MCF 10A (cell line): ENCODE measurements at regions of chr19 and their contacts with region 1.

Region 1: GRCh38 chr19:50476224-50476942 is at the starts of genes EMC10 and GARIN5A:
- DNase-seq: peak; percentile 89
- H3K4me3 Mint-ChIP-seq: peak within 1 kb of the TSS; percentile 99
- H3K27ac Mint-ChIP-seq: peak within 1 kb of the TSS; percentile 88
- H3K4me1 Mint-ChIP-seq: peaks cover 13% of the 10 kb centered on the region
- H3K27me3 Mint-ChIP-seq: no peaks in the 10 kb centered on the region
- CTCF ChIP-seq: no peak
- total RNA-seq, gene EMC10: 61.3 and 61.8 TPM in 2 replicates
- total RNA-seq, gene GARIN5A: 1.5 and 2.7 TPM in 2 replicates

Region 2: GRCh38 chr19:50383852-50384684 is 92.3 kb before region 1 on chr19 and contains the start of gene POLD1:
- CTCF ChIA-PET with region 1: no interaction called
- POLR2A ChIA-PET with region 1: interaction called, 6 read pairs
- intact Hi-C with region 1: loop called (anchors 1 kb)
- DNase-seq: peak; percentile 98
- H3K4me3 Mint-ChIP-seq: peak within 1 kb of the TSS; percentile 85
- H3K27ac Mint-ChIP-seq: peak within 1 kb of the TSS; percentile 72
- H3K4me1 Mint-ChIP-seq: peaks cover 22% of the 10 kb centered on the region
- H3K27me3 Mint-ChIP-seq: no peaks in the 10 kb centered on the region
- CTCF ChIP-seq: no peak
- total RNA-seq, gene POLD1: 18.9 and 31.9 TPM in 2 replicates

Region 3: DNA sequence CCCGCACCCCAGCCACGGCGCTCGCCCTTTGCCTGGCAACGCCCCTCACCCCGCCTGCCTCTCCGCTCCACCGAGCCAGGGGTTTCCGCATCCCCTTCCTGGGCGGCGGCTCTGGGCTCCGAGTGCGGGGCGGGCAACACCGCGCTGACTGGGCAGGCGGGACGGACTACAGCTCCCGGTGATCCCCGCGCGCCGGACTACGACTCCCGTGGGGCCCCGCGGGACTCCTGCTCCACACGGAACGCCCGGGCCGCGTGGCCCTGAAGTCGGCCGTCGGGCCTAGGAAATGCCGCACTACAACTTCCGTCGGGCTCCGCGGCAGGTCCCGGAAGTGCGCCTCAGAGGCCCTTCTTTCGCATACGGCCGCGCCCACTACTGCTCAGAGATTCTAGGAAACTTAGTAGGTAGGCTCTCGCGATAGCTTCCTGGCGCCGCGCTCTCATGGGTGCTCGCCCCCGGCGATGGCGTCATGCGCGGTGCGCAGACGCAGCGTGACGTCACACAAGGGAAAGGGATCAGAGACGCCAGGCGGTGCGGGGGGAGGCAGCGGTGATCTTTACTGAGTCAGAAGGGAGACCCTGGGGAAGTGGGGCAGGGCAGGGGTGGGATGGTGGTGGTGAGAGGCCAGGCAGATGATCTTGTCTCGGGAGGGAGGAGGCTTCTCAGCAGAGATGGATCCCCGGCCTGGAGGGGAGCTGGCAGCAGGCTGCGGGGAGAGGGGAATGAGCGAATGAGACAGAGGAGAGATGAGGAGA is 34.9 kb after region 1 on chr19 and contains the start of gene JOSD2:
- CTCF ChIA-PET with region 1: interaction called, 4 read pairs
- POLR2A ChIA-PET with region 1: interaction called, 4 read pairs
- intact Hi-C with region 1: loop called (anchors 1 kb)
- DNase-seq: peak; percentile 100
- H3K4me3 Mint-ChIP-seq: peak within 1 kb of the TSS; percentile 86
- H3K27ac Mint-ChIP-seq: peak within 1 kb of the TSS; percentile 96
- H3K4me1 Mint-ChIP-seq: peaks cover 16% of the 10 kb centered on the region
- H3K27me3 Mint-ChIP-seq: no peaks in the 10 kb centered on the region
- CTCF ChIP-seq: no peak
- total RNA-seq, gene JOSD2: 65.8 and 76.9 TPM in 2 replicates

Region 4: GRCh38 chr19:50624949-50625600 is 148.7 kb after region 1 on chr19:
- CTCF ChIA-PET with region 1: no interaction called
- POLR2A ChIA-PET with region 1: no interaction called
- intact Hi-C with region 1: no loop called
- DNase-seq: no peak
- H3K4me3 Mint-ChIP-seq: no peak overlapping the region
- H3K27ac Mint-ChIP-seq: no peak overlapping the region
- H3K4me1 Mint-ChIP-seq: no peaks in the 10 kb centered on the region
- H3K27me3 Mint-ChIP-seq: no peaks in the 10 kb centered on the region
- CTCF ChIP-seq: no peak